SK-N-SH (cell line): ENCODE measurements at regions of chr11 and their contacts with region 1.

Region 1: DNA sequence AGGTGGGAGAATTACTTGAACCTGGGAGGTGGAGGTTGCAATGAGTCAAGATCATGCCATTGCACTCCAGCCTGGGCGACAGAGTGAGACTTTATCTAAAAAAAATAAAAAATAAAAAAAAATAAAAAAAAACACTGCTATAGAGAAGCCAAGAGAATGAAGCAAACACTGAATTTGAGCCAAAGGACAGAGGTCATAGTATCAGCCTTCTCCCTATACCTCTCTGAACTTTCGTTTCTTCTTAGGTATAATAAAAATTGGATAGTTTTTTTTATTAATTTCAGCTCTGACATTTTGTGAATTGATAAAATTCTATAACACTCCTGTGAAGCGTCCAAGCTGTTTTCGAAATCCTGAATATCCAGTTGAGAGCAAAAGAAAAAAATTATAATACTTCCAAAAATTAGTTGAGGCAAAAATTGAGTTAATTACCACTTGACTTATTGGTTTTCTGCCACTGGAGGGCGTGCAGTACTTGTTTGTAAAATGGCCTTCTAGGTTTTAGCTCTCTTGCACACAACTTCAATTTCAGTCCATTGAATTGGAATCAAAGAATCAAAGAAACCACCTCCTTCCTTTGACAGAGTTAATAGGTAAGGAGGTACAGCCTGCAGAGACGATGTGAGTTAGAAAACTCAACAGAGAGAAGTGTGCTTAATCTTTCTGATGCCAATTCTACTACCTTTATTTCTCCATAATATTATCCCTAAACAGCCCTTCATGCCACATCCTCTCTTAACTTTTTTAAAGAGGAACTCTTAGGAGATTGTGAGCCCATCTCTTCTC is 143.2 kb downstream of the BBOX1 start:
- DNase-seq: peak; percentile 25
- H3K4me3 ChIP-seq: no peak overlapping the region; a peak in 1 of 4 replicates
- H3K27ac ChIP-seq: no peak overlapping the region
- H3K4me1 ChIP-seq: peaks cover 0 to 12% of the 10 kb centered on the region in 2 experiments; a peak in 2 of 4 replicates
- H3K27me3 ChIP-seq: no peaks in the 10 kb centered on the region
- CTCF ChIP-seq: peak; percentile 87
- EP300 ChIP-seq: no peak
- RAD21 ChIP-seq: peak; percentile 97

Region 2: DNA sequence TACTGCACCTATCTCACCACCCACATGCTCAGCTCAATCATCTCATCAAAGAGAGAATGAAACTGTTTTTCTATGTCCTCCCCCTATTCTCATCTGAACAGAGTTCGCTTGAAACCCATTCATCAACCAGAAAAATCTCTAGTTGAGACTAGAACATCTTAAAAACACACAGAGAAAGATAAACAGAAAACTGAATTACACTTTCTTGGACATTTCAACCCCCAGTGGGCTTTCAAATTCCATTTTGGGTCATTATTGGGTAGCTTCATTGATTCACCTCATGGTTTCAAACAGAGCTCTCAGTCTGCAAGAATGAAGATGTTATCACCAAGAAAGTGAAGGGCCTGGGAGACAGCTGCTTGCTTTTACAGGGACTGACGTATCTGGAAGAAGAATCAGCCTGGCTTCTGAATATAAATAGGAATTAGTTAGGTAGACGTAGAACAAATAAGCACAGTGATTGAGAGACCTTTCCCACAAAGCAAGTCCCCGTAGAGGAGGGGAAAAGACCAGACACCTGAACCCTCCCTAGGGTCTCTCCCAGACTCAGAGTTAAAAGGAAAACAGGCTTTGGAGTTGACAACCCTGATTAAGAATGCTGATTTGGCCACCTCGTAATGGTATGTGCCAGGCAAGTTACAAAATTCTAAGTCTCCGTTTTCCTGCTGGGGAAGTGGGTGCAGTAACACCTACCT is 12.5 kb after region 1 on chr11:
- CTCF ChIA-PET with region 1: interaction called, 28 read pairs
- POLR2A ChIA-PET with region 1: no interaction called
- DNase-seq: no peak
- H3K4me3 ChIP-seq: no peak overlapping the region
- H3K27ac ChIP-seq: peak overlapping the region; percentile 47 to 66; a peak in 3 of 4 replicates
- H3K4me1 ChIP-seq: peaks cover 25 to 28% of the 10 kb centered on the region in 2 experiments; a peak in 3 of 4 replicates
- H3K27me3 ChIP-seq: no peaks in the 10 kb centered on the region
- CTCF ChIP-seq: no peak
- EP300 ChIP-seq: peak in 1 of 2 experiments; percentile 67; a peak in 2 of 4 replicates
- RAD21 ChIP-seq: no peak

Region 3: GRCh38 chr11:27266125-27266524 is 82.3 kb after region 1 on chr11:
- CTCF ChIA-PET with region 1: interaction called, 12 read pairs
- POLR2A ChIA-PET with region 1: no interaction called
- DNase-seq: peak; percentile 41
- H3K4me3 ChIP-seq: no peak overlapping the region
- H3K27ac ChIP-seq: peak overlapping the region in 1 of 2 experiments; percentile 56; a peak in 2 of 4 replicates
- H3K4me1 ChIP-seq: peaks cover 0 to 13% of the 10 kb centered on the region in 2 experiments; a peak in 2 of 4 replicates
- H3K27me3 ChIP-seq: no peaks in the 10 kb centered on the region
- CTCF ChIP-seq: no peak
- EP300 ChIP-seq: peak in 1 of 2 experiments; percentile 67; a peak in 1 of 4 replicates
- RAD21 ChIP-seq: peak; percentile 26

Region 4: GRCh38 chr11:27309046-27309445 is 125.2 kb after region 1 on chr11:
- CTCF ChIA-PET with region 1: interaction called, 10 read pairs
- POLR2A ChIA-PET with region 1: no interaction called
- DNase-seq: no peak
- H3K4me3 ChIP-seq: no peak overlapping the region
- H3K27ac ChIP-seq: no peak overlapping the region
- H3K4me1 ChIP-seq: peaks cover 12 to 13% of the 10 kb centered on the region in 2 experiments
- H3K27me3 ChIP-seq: no peaks in the 10 kb centered on the region
- CTCF ChIP-seq: no peak
- EP300 ChIP-seq: no peak
- RAD21 ChIP-seq: no peak

Region 5: DNA sequence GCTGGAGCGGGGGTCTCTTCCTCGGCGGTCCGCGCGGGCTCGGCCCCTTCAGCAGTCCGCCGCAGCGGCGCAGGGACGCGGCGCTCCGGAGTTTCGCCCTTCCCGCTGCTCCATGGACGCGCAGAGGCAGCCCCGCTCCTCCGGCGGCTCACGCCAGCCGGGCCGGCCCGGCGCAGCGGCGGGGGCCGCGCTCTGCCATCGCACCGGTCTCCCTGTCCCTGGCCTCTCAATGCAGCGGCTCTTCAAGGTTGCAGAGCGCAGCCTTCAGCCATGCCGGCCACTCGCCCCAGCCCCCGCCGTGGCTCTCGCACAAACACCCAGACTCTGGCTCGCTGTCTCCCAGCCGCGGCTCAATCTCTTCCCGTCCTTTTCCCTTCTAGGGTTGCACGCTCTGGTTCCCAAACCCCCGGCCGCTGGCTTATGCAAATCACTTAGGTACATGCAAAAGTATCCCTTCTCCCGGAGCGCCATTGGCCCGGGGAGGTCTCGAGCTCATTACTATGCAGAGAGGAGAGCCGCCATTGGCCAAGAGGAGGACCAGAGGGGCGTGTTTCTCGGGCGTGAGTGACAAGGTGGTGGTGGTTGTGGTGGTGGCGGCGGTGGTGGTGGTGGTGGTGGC is 288.6 kb after region 1 on chr11 and contains the start of gene LGR4:
- CTCF ChIA-PET with region 1: interaction called, 223 read pairs
- POLR2A ChIA-PET with region 1: no interaction called
- DNase-seq: peak; percentile 90
- H3K4me3 ChIP-seq: peak within 1 kb of the TSS; percentile 75 to 87
- H3K27ac ChIP-seq: peak within 1 kb of the TSS; percentile 63 to 75
- H3K4me1 ChIP-seq: peaks cover 10 to 33% of the 10 kb centered on the region in 2 experiments
- H3K27me3 ChIP-seq: no peaks in the 10 kb centered on the region
- CTCF ChIP-seq: no peak
- EP300 ChIP-seq: no peak
- RAD21 ChIP-seq: no peak
- polyA plus RNA-seq, gene LGR4: 2.6 and 4.6 TPM in 2 replicates